GM18951 (cell line): ENCODE measurements at regions of chr1 and their contacts with region 1.

Region 1: DNA sequence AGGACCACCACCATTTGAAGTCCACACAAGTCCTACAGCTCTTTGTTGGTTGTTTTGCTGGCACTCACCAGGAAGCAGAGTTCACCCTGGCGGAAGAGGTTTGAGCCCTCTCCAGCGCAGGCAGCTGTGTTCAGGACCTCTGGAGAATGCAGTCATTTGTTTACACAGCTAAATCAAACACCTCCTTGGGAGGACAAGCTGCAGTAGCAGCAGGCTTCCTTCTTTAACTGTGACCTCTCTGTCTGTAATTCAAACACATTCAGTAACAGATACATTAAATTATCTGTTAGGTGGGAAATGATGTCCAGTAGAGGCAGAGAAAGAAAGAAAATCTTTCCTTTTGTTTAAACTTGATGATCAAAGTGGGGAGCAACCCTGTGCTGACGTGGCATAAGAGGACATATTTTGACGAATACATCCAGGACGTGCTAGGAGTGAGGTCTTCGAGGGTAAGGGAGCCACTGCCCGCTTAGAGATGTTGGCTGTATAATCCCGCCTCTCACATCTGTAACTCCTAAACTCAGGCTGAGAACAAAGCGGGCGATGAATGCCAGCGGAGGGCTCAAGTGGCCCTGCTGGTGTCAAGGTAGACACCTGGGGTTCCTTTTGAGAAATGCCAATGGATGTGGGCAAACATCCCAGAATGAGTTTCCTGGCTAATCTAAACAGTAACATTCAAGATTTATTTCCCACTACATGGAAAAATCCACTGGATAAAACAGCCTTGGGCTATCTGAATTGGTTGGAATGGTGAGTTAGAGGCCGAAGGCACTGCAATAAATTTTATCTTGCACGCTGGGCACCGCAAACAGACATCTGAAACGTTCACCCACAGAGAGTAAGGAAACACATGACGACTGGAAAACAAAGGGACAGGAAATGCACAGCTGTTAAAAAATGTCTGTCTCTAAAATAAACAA is 51.7 kb downstream of the ABCA4 start:
- POLR2A ChIP-seq: no peak

Region 2: GRCh38 chr1:93804412-93804811 is 264.8 kb before region 1 on chr1:
- in situ Hi-C with region 1: no loop called
- POLR2A ChIP-seq: no peak

Region 3: DNA sequence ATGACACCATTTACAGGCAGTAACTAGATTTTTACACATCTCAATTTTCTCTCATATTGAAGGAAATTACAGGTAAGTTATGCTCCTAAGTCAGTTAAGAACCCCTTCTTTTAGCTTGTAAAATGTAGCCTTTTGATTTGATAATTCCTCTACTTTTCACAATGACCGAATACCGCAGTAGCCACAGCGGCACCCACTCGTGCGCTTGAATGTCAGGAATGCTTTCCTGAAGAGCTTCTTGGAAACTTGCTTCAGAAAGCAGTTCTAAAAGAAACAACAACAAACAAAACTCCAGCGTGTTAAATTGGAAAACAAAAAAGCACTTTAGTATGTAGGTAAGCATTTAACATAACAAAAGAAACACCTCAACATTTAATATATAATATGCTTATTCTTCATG is 180.4 kb before region 1 on chr1:
- in situ Hi-C with region 1: no loop called
- POLR2A ChIP-seq: no peak

Region 4: DNA sequence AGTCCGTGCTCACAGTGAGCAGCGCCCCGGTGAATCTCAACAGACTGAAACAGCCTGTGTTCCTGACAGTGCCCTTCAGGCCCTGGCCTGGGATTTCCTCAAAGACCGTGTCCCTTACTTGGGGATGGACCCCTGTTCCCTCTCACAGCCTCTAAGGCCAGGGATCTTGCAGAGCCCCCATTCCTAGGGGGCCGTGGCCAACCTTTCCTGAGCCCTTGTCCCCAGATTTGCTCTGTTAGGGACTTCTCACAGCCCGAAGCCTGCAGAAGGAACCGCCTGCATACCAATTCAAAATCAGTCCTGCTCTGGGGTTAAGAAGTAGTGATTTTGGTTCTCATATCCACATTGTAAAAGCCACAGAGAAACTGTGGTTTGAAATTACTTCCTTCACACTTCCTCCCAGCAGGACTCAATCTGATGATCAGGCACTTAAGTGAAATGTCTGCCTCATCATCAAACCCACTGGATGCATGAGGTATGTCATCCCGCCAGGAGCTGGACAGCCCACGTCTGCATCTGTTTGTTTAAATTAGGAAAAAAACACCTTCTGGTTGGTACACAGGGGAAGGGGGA is 36.8 kb after region 1 on chr1:
- in situ Hi-C with region 1: no loop called
- POLR2A ChIP-seq: no peak

Region 5: GRCh38 chr1:94335950-94336349 is 266.7 kb after region 1 on chr1:
- in situ Hi-C with region 1: loop called (anchors 5 kb)
- POLR2A ChIP-seq: no peak